CD8-positive, alpha-beta T cell (primary cell): ENCODE measurements at regions of chr5 and their contacts with region 1.

Region 1: DNA sequence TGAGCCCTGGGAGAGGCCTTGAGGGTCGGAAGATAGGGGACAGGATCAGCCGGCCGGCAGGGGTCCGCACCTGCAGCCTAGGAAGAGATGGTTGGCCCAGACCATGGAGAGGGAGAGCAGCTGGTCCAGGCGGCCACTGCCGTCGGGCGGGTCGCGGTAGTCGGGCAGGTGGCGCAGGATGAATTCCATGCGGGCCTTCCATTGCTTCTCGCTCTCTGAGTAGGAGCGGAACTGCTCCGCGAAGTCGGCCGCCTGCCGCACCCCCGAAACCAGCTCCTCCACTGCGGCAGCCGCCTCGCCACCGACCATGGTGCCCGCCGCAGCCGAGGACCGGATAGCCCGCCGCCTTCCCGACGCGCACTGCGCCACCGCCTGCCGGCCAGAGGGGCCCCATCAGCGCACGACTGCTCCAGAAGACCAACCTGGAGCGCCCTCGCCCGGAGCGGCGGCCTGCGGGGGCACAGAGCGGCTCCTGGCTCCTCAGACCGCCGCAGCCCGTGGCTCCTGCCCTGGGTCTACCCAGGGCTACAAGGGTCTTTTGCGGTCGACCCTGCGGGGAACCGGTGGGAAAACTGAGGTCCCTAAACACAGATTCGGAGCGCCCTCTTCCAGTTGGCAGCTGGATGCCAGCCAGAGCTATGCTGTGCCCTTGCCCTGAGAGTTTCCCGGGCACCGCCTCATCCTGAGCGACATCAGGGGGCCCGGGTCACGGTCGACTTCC is at the start of gene CDKN2AIPNL:
- DNase-seq: peak; percentile 81 to 95 (median 91)
- ATAC-seq: peak; percentile 99
- H3K4me3 ChIP-seq: peak within 1 kb of the TSS; percentile 77 to 84
- H3K4me3 Mint-ChIP-seq: peak within 1 kb of the TSS; percentile 90
- H3K27ac ChIP-seq: peak within 1 kb of the TSS; percentile 65 to 66
- H3K27ac Mint-ChIP-seq: peak within 1 kb of the TSS; percentile 90
- H3K4me1 ChIP-seq: peaks cover 23% of the 10 kb centered on the region
- H3K4me1 Mint-ChIP-seq: peaks cover 38% of the 10 kb centered on the region
- H3K27me3 ChIP-seq: no peaks in the 10 kb centered on the region
- H3K27me3 Mint-ChIP-seq: no peaks in the 10 kb centered on the region
- CTCF ChIP-seq: peak; percentile 73
- total RNA-seq, gene CDKN2AIPNL: 14.7 to 15.5 TPM

Region 2: GRCh38 chr5:134176511-134177368 is 235.0 kb before region 1 on chr5 and contains the start of gene SKP1:
- CTCF ChIA-PET with region 1: no interaction called
- POLR2A ChIA-PET with region 1: no interaction called
- intact Hi-C with region 1: loop called in 1 of 2 experiments (anchors 10 kb)
- DNase-seq: peak; percentile 79 to 93 (median 85)
- ATAC-seq: peak; percentile 88
- H3K4me3 ChIP-seq: peak within 1 kb of the TSS; percentile 98 to 99
- H3K4me3 Mint-ChIP-seq: peak within 1 kb of the TSS; percentile 98
- H3K27ac ChIP-seq: peak within 1 kb of the TSS; percentile 98
- H3K27ac Mint-ChIP-seq: peak within 1 kb of the TSS; percentile 99
- H3K4me1 ChIP-seq: peaks cover 31% of the 10 kb centered on the region
- H3K4me1 Mint-ChIP-seq: peaks cover 34% of the 10 kb centered on the region
- H3K27me3 ChIP-seq: no peaks in the 10 kb centered on the region
- H3K27me3 Mint-ChIP-seq: no peaks in the 10 kb centered on the region
- CTCF ChIP-seq: no peak
- total RNA-seq, gene SKP1: 290 to 301 TPM

Region 3: GRCh38 chr5:134394932-134395331 is 16.8 kb before region 1 on chr5:
- CTCF ChIA-PET with region 1: interaction called, 12 read pairs
- POLR2A ChIA-PET with region 1: interaction called, 3 read pairs
- intact Hi-C with region 1: no loop called
- DNase-seq: no peak
- ATAC-seq: no peak
- H3K4me3 ChIP-seq: no peak overlapping the region
- H3K4me3 Mint-ChIP-seq: no peak overlapping the region
- H3K27ac ChIP-seq: no peak overlapping the region
- H3K27ac Mint-ChIP-seq: no peak overlapping the region
- H3K4me1 ChIP-seq: no peaks in the 10 kb centered on the region
- H3K4me1 Mint-ChIP-seq: peaks cover 2% of the 10 kb centered on the region
- H3K27me3 ChIP-seq: no peaks in the 10 kb centered on the region
- H3K27me3 Mint-ChIP-seq: no peaks in the 10 kb centered on the region
- CTCF ChIP-seq: no peak

Region 4: DNA sequence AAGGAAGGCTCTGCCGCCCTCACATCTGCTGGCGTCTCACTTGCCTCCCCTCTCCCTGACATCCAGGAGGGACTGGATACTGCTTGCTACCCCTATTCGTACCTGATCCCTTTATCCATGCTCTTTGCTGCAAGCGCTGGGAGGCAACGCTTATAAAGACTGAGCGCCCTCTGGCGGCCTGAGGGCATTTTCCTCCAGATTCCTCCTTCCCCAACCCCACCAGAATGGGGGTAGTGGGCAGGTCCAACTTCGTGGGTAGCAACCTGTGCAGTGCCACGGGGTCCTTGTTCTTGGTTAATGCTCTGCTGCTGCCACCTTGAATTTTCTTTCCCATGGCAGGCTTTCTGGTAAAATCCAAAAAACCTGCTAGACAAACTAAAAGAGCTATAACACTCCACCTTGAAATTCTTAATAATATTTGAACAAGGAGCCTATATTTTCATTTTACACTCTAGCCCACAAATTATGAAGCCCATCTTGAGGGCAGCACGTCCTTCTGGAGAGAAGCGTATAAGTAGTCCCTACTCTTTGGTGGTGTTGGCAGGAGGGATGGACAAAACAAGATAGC is 166.2 kb after region 1 on chr5:
- CTCF ChIA-PET with region 1: interaction called, 19 read pairs
- POLR2A ChIA-PET with region 1: interaction called, 3 read pairs
- intact Hi-C with region 1: loop called (anchors 1 to 5 kb)
- DNase-seq: peak; percentile 55 to 82 (median 78)
- ATAC-seq: peak; percentile 77
- H3K4me3 ChIP-seq: no peak overlapping the region
- H3K4me3 Mint-ChIP-seq: no peak overlapping the region
- H3K27ac ChIP-seq: no peak overlapping the region
- H3K27ac Mint-ChIP-seq: peak overlapping the region; percentile 72
- H3K4me1 ChIP-seq: no peaks in the 10 kb centered on the region
- H3K4me1 Mint-ChIP-seq: peaks cover 9% of the 10 kb centered on the region
- H3K27me3 ChIP-seq: no peaks in the 10 kb centered on the region
- H3K27me3 Mint-ChIP-seq: no peaks in the 10 kb centered on the region
- CTCF ChIP-seq: peak; percentile 79

Region 5: DNA sequence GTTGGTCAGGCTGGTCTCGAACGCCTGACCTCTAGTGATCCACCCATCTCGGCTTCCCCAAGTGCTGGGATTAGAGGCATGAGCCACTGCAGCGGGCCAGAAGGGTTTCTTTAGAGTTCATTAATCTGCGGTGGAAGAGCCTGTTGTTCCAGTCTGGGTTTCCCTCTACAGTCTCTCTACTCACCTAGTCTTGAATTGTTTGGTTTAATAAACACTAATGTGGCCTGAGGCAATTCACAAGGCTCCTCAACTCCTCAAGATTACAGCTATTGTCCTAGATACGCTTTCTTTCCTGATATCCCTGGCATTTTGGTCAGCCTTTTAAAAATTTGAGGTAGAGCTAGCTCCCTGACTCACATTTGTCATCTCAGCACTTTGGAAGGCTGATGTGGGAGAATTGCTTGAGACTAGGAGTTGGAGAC is 225.5 kb after region 1 on chr5:
- CTCF ChIA-PET with region 1: no interaction called
- POLR2A ChIA-PET with region 1: no interaction called
- intact Hi-C with region 1: loop called in 1 of 2 experiments (anchors 2 kb)
- DNase-seq: no peak
- ATAC-seq: no peak
- H3K4me3 ChIP-seq: no peak overlapping the region
- H3K4me3 Mint-ChIP-seq: no peak overlapping the region
- H3K27ac ChIP-seq: no peak overlapping the region
- H3K27ac Mint-ChIP-seq: no peak overlapping the region
- H3K4me1 ChIP-seq: no peaks in the 10 kb centered on the region
- H3K4me1 Mint-ChIP-seq: peaks cover under 1% of the 10 kb centered on the region
- H3K27me3 ChIP-seq: no peaks in the 10 kb centered on the region
- H3K27me3 Mint-ChIP-seq: no peaks in the 10 kb centered on the region
- CTCF ChIP-seq: no peak

Region 6: DNA sequence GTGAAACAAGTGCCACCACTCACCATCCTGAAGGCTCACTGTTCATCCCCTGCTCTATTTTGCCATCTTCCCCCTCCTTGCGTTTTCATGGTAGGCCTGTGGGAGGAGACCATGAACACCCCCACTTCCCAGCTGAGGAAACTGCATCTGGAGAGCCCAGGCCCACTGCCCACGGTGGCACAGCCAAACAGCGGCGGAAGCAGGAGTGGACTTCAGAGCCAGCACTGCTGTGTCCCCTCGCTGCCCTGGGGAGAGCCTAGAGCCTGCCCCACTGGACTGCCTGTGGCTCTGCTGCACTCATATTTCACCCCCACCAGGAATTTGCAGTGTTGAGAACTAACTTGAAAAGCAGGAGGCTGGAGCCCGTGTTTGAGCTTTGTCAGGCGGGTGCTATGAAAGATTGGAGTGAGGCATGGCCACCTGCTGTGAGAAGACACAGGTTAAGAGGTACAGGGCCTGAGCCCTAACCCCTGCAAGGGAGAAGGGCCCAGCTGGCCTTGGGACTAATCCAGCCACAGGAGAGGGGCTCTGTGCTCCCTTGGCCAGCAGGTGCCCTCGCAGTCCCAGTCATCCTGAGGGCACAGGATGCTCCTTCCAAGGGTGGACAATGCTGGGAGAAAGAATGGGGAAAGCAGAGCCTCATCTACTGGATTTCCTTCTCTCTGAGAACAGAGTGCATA is 908.4 kb after region 1 on chr5:
- CTCF ChIA-PET with region 1: no interaction called
- POLR2A ChIA-PET with region 1: no interaction called
- intact Hi-C with region 1: no loop called
- DNase-seq: no peak
- ATAC-seq: no peak
- H3K4me3 ChIP-seq: no peak overlapping the region
- H3K4me3 Mint-ChIP-seq: no peak overlapping the region
- H3K27ac ChIP-seq: no peak overlapping the region
- H3K27ac Mint-ChIP-seq: no peak overlapping the region
- H3K4me1 ChIP-seq: peaks cover 7% of the 10 kb centered on the region
- H3K4me1 Mint-ChIP-seq: peaks cover 6% of the 10 kb centered on the region
- H3K27me3 ChIP-seq: no peaks in the 10 kb centered on the region
- H3K27me3 Mint-ChIP-seq: no peaks in the 10 kb centered on the region
- CTCF ChIP-seq: no peak

Region 7: GRCh38 chr5:135671052-135671705 is 1259.5 kb after region 1 on chr5:
- CTCF ChIA-PET with region 1: no interaction called
- POLR2A ChIA-PET with region 1: no interaction called
- intact Hi-C with region 1: no loop called
- DNase-seq: no peak
- ATAC-seq: no peak
- H3K4me3 ChIP-seq: no peak overlapping the region
- H3K4me3 Mint-ChIP-seq: no peak overlapping the region
- H3K27ac ChIP-seq: no peak overlapping the region
- H3K27ac Mint-ChIP-seq: no peak overlapping the region
- H3K4me1 ChIP-seq: no peaks in the 10 kb centered on the region
- H3K4me1 Mint-ChIP-seq: no peaks in the 10 kb centered on the region
- H3K27me3 ChIP-seq: no peaks in the 10 kb centered on the region
- H3K27me3 Mint-ChIP-seq: peaks cover 14% of the 10 kb centered on the region
- CTCF ChIP-seq: no peak